Testis (tissue), 5 donors: ENCODE measurements at regions of chr9 and their contacts with region 1.

Region 1: DNA sequence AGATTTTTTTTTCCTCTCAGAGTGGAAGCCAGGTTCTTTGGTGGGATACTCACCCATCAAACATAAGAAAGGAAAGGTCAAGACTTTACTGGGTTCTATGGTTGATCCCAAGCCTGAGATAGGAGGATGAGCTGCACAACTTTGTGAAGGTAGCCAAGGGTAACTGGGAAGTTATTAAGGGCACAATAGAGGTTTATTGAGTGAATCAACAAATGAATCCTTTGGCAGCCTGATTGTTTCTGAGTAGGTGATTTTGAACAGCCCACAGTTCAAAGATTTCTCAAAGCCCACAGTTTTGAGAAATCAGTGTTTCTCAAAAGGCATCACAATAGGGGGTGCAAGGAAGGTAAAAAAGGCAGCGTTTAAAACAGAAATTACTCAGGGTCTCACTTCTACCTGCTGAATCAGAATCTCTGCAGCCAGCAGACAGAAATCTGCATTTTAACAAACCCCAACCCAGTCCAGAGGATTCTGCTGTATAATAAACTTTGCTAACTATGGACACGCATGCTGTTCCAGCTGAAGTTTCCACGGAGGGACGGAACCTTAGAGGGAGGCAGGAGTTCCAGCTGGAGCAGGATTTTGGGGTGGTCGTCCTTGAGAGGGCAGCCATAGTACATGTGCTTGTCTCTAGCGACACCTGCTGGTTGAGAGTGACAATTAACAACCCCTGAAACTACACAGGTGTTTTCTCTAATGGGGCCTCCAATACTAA is 32.7 kb upstream of the FSD1L start:
- DNase-seq: peak; percentile 80
- H3K4me3 ChIP-seq: no peak overlapping the region
- H3K27ac ChIP-seq: no peak overlapping the region
- H3K4me1 ChIP-seq: peaks cover 6% of the 10 kb centered on the region
- H3K27me3 ChIP-seq: no peaks in the 10 kb centered on the region
- CTCF ChIP-seq: peak; percentile 75 to 87 (median 82)
- POLR2A ChIP-seq: no peak

Region 2: DNA sequence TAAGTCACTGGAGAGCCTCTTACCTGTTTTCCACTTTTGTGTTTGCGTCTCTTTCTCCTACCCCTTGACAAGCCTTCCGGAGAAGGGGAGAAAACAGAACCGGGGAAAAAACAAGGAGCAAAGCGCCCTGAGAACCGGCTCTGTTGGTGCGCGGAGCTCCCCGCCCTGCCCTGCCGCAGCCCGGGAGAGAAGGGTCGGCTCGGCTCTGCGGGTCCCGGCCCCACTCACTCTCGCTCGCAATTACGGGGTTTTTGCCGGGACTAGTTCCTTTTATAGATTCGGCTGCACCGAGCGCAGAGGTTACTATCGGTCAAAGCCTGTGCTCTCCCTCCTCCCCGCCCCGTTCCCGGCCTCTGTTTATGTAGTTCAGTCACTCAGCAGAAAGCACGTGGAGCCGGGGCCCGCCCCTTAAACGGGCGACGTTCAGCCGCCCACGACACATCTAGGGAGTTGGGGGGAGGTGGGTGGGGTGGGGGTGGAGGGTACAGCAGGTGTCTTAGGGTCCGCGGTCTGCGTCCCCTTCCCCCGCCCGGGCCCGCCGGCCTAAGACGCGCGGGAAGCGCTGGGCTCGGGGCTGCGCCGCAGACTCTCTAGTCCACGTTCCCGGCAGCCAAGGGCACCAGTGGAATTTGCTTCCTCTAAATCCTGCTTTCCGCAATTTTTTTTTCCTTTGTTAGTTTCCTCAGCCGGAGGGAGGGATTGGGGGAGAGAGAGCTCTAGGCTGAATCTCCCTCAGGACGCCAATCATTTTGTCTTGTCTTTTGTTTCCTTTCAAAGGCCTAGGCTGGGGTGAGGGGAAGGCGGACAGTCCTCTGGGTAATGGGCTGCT is 487.0 kb before region 1 on chr9 and contains the start of gene ABCA1:
- intact Hi-C with region 1: loop called (anchors 10 kb)
- DNase-seq: peak; percentile 99
- H3K4me3 ChIP-seq: peak within 1 kb of the TSS; percentile 80 to 87
- H3K27ac ChIP-seq: peak within 1 kb of the TSS; percentile 75 to 83
- H3K4me1 ChIP-seq: peaks cover 8% of the 10 kb centered on the region
- H3K27me3 ChIP-seq: no peaks in the 10 kb centered on the region
- CTCF ChIP-seq: no peak
- POLR2A ChIP-seq: no peak
- total RNA-seq, gene ABCA1: 42.0 to 57.9 TPM

Region 3: GRCh38 chr9:105157130-105157583 is 257.9 kb before region 1 on chr9:
- intact Hi-C with region 1: loop called (anchors 10 kb)
- DNase-seq: peak; percentile 84
- H3K4me3 ChIP-seq: peak overlapping the region in 1 of 2 donors; percentile 35
- H3K27ac ChIP-seq: no peak overlapping the region
- H3K4me1 ChIP-seq: no peaks in the 10 kb centered on the region
- H3K27me3 ChIP-seq: no peaks in the 10 kb centered on the region
- CTCF ChIP-seq: peak; percentile 37 to 52 (median 47)
- POLR2A ChIP-seq: no peak

Region 4: GRCh38 chr9:105373723-105374122 is 41.4 kb before region 1 on chr9:
- intact Hi-C with region 1: no loop called
- DNase-seq: no peak
- H3K4me3 ChIP-seq: no peak overlapping the region
- H3K27ac ChIP-seq: no peak overlapping the region
- H3K4me1 ChIP-seq: no peaks in the 10 kb centered on the region
- H3K27me3 ChIP-seq: no peaks in the 10 kb centered on the region
- CTCF ChIP-seq: no peak
- POLR2A ChIP-seq: no peak